ENCODE measurements at regions of chr1 and their contacts with region 1.

Region 1: DNA sequence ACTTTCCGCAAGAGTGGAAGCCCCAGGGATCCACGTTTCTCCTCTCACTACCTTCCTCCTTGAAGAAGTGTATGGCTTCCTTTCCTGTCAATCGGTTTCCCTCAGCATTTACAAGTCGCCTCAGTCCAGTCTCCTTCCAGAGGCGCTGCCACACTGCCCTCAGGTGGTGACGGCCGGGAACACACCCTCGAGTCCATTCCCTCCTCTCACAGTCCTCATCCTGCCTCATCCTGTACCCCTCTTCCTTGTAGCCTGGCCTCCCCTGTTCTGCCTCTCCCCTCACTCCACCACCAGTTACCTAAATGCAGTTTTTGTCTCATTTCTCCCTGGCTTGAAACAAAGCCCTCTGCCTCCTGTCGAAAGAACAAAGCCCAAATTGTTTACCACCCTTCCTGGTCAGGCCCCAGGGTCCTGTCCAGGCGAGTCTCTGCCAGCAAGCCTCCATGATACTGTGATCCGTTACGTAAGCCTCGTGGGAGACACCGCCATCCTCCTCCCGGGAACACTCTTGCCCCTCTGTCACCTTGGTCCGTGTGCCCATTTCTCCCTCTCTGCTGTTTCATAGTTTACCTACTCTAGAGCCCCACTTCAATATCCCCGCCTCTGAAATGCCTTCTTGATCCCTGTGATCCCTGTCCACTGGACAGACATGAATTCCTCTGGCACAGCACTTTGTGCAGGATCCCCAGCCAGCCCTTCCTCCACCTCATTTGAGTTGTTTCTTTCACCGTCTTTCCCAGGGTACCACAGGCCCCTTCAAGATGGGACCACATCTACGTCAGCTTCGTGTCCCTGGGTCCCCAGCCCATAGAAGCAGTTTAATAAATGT is 23.3 kb upstream of the LSM10 start:
- DNase-seq: peak; percentile 85
- ATAC-seq: peak; percentile 100
- H3K4me3 Mint-ChIP-seq: peak overlapping the region; percentile 20
- H3K27ac Mint-ChIP-seq: peak overlapping the region; percentile 56
- H3K4me1 Mint-ChIP-seq: peaks cover 7% of the 10 kb centered on the region
- H3K27me3 Mint-ChIP-seq: no peaks in the 10 kb centered on the region
- CTCF ChIP-seq: peak; percentile 44

Region 2: DNA sequence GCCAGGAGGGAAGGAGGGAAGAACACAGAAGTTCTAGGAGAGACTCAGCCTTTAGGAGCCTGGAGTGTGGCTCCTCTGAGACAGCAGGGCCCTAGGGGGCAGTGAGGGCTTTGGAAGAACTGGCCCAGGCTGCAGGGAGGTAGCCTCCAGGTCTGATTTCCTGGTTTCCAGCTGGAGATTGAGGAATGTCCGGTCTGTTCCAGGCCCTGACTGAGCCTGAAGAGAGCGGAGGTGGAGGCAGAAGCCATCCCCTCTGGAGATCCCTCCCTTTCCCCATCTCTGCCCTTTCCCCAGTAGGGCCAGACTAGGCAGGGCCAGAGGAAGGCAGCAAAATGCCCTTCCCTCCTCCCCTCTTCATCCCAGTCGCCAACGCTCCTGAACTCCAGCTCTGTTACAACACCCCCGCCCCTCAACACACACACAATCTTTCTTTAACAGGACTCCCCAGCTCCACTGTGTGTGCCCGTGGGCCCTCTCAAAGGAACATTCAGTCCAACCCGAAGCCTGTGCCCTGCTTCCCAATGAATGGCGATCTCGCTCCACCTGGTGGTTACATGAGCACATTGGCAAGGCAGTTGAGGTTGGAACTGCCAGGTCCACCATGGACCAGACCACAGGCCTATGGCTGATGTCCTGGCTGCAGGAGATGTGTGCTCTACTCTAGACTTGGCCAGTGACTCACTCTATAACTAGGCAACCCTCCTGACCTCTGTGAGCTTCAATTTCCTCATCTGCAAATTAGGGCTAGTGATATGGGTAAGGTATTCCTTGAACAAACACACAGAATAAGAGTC is 233.1 kb before region 1 on chr1:
- CTCF ChIA-PET with region 1: no interaction called
- POLR2A ChIA-PET with region 1: no interaction called
- intact Hi-C with region 1: loop called (anchors 2 kb)
- DNase-seq: peak; percentile 58
- ATAC-seq: peak; percentile 99
- H3K4me3 Mint-ChIP-seq: no peak overlapping the region
- H3K27ac Mint-ChIP-seq: no peak overlapping the region
- H3K4me1 Mint-ChIP-seq: peaks cover 3% of the 10 kb centered on the region
- H3K27me3 Mint-ChIP-seq: no peaks in the 10 kb centered on the region
- CTCF ChIP-seq: no peak

Region 3: GRCh38 chr1:36306902-36307456 is 114.1 kb before region 1 on chr1:
- CTCF ChIA-PET with region 1: no interaction called
- POLR2A ChIA-PET with region 1: no interaction called
- intact Hi-C with region 1: loop called (anchors 2 kb)
- DNase-seq: peak; percentile 94
- ATAC-seq: peak; percentile 98
- H3K4me3 Mint-ChIP-seq: peak overlapping the region; percentile 97
- H3K27ac Mint-ChIP-seq: peak overlapping the region; percentile 88
- H3K4me1 Mint-ChIP-seq: peaks cover 40% of the 10 kb centered on the region
- H3K27me3 Mint-ChIP-seq: no peaks in the 10 kb centered on the region
- CTCF ChIP-seq: no peak

Region 4: GRCh38 chr1:36350659-36351226 is 70.3 kb before region 1 on chr1:
- CTCF ChIA-PET with region 1: interaction called, 3 read pairs
- POLR2A ChIA-PET with region 1: no interaction called
- intact Hi-C with region 1: loop called (anchors 2 kb)
- DNase-seq: peak; percentile 36
- ATAC-seq: peak; percentile 90
- H3K4me3 Mint-ChIP-seq: no peak overlapping the region
- H3K27ac Mint-ChIP-seq: peak overlapping the region; percentile 66
- H3K4me1 Mint-ChIP-seq: peaks cover 29% of the 10 kb centered on the region
- H3K27me3 Mint-ChIP-seq: no peaks in the 10 kb centered on the region
- CTCF ChIP-seq: no peak

Region 5: DNA sequence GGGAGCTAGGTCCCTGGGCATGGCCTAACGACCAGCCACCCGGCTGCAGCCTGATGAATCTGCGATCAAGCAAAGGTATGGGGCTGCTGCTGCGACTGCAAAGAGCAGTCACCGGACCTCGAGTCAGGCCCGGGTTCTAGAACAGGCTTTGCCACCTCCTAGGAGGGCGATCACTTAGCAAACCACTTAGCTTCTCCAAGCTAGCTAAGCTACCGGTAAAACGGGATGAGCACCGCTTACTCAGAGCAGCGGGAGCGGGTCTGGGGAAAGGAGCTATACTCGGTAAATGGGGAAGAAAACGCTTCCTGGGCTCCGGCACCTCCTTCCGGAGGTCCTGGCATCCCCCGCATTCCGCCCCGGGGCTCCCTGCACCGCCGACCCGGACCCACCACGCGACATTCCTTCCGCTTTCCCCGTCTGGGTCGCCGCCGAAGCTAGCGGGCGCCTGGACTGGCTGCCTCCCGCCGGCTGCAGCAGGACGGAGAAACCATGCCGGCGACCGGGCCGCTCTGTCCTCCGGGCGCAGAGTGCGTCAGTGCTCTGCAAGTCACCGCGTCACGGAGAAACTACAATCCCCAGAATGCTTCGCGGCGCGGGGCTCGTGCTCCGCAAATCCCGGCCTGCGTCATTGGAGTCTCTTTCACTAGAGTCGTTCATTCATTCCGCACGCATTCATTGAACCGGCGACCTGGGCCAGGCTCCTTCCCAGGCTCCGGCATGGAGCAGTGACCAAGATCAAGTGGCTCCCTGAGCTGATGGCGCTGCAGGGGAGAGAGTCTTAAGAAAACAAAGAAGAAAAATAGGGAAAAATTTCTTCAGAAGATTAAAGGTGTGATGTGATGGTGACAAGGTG is 23.4 kb before region 1 on chr1 and contains the start of gene LSM10:
- CTCF ChIA-PET with region 1: no interaction called
- POLR2A ChIA-PET with region 1: interaction called, 4 read pairs
- intact Hi-C with region 1: loop called (anchors 2 kb)
- DNase-seq: peak; percentile 87
- ATAC-seq: peak; percentile 82
- H3K4me3 Mint-ChIP-seq: peak within 1 kb of the TSS; percentile 99
- H3K27ac Mint-ChIP-seq: peak within 1 kb of the TSS; percentile 95
- H3K4me1 Mint-ChIP-seq: peaks cover 68% of the 10 kb centered on the region
- H3K27me3 Mint-ChIP-seq: no peaks in the 10 kb centered on the region
- CTCF ChIP-seq: no peak
- total RNA-seq, gene LSM10: 59.8 and 62.7 TPM in 2 replicates